ENCODE measurements at regions of chr17 and their contacts with region 1.

Region 1: DNA sequence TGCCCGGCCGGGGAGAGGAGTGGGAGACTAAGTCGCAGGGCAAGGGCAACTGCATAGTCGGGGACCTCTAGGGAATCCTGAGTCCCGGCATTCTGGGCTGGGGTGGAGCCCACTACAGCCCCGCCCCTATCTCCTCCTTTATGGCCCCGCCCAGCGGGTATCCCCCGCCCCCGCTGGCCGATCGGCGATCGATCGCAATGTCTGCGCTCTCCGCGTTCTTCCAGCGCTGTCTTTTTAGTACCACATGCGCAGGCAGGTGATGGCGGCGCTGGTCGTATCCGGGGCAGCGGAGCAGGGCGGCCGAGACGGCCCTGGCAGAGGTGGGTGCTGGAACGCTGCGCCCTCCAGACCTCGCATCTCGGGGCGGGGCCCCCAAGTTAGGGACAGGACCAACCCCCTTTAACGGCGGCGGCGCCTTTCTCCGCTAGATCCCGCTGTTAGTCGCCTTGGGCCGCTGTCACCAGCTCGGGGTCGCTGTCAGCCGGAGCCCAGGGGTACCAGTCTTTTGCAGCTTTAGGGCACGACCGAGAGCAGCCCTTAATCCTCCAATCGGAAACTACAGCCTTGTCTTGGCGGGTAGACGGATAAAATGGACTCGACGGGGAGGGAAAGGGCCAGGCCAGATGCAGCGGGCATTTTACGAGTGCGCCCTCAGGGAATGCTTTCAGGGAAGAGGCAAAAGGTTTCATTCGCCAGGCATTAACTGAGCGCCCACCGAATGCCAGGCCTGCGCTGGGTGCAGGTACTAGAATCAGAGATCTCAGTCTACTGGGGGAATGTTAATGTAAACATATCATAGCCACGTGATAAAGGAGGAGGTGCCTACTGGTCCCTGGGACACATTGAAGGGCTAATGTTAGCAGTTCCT is at the start of gene DPH1:
- DNase-seq: peak; percentile 91 to 99
- ATAC-seq: peak; percentile 83 to 93
- H3K4me3 ChIP-seq: peak within 1 kb of the TSS; percentile 80
- H3K27ac ChIP-seq: peak within 1 kb of the TSS; percentile 71 to 90
- H3K4me1 ChIP-seq: peaks cover 19% of the 10 kb centered on the region
- CTCF ChIP-seq: no peak
- EP300 ChIP-seq: no peak
- POLR2A ChIP-seq: peak; percentile 64
- RAD21 ChIP-seq: peak in 1 of 2 experiments; percentile 9; a peak in 3 of 5 replicates
- polyA plus RNA-seq, gene DPH1: 25.5 and 33.0 TPM in 2 replicates

Region 2: DNA sequence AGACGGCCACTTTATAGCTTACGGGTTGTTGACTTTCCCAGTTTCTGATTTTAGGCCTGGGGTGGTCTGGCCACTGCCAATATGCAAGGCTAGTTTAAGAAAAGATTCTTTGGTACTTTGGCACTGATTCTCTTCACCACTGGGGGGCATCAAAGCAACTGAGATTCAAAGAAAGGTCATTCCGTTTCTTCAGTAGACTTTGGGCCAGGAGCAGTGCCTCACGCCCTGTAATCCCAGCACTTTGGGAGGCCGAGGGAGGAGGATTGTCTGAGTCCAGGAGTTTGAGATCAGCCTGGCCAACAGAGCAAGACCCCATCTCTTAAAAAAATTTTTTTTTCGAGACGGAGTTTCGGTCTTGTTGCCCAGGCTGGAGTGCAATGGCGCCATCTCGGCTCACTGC is 147.3 kb before region 1 on chr17:
- CTCF ChIA-PET with region 1: interaction called, 213 read pairs
- POLR2A ChIA-PET with region 1: no interaction called
- DNase-seq: peak; percentile 59 to 66
- ATAC-seq: peak; percentile 41 to 80; a peak in 3 of 6 replicates
- H3K4me3 ChIP-seq: no peak overlapping the region
- H3K27ac ChIP-seq: no peak overlapping the region
- H3K4me1 ChIP-seq: no peaks in the 10 kb centered on the region
- CTCF ChIP-seq: peak; percentile 58
- EP300 ChIP-seq: no peak
- POLR2A ChIP-seq: no peak
- RAD21 ChIP-seq: peak; percentile 59 to 65

Region 3: GRCh38 chr17:1920948-1921351 is 109.2 kb before region 1 on chr17:
- CTCF ChIA-PET with region 1: interaction called, 420 read pairs
- POLR2A ChIA-PET with region 1: no interaction called
- DNase-seq: no peak
- ATAC-seq: no peak
- H3K4me3 ChIP-seq: no peak overlapping the region
- H3K27ac ChIP-seq: no peak overlapping the region
- H3K4me1 ChIP-seq: no peaks in the 10 kb centered on the region
- CTCF ChIP-seq: no peak
- EP300 ChIP-seq: no peak
- POLR2A ChIP-seq: no peak
- RAD21 ChIP-seq: no peak

Region 4: GRCh38 chr17:1939981-1940809 is 90.0 kb before region 1 on chr17:
- CTCF ChIA-PET with region 1: interaction called, 31 read pairs
- POLR2A ChIA-PET with region 1: no interaction called
- DNase-seq: no peak
- ATAC-seq: no peak
- H3K4me3 ChIP-seq: no peak overlapping the region
- H3K27ac ChIP-seq: no peak overlapping the region
- H3K4me1 ChIP-seq: no peaks in the 10 kb centered on the region
- CTCF ChIP-seq: no peak
- EP300 ChIP-seq: no peak
- POLR2A ChIP-seq: no peak
- RAD21 ChIP-seq: no peak

Region 5: GRCh38 chr17:1972487-1973160 is 57.5 kb before region 1 on chr17:
- CTCF ChIA-PET with region 1: interaction called, 32 read pairs
- POLR2A ChIA-PET with region 1: no interaction called
- DNase-seq: no peak
- ATAC-seq: no peak
- H3K4me3 ChIP-seq: no peak overlapping the region
- H3K27ac ChIP-seq: no peak overlapping the region
- H3K4me1 ChIP-seq: no peaks in the 10 kb centered on the region
- CTCF ChIP-seq: no peak
- EP300 ChIP-seq: no peak
- POLR2A ChIP-seq: no peak
- RAD21 ChIP-seq: no peak

Region 6: DNA sequence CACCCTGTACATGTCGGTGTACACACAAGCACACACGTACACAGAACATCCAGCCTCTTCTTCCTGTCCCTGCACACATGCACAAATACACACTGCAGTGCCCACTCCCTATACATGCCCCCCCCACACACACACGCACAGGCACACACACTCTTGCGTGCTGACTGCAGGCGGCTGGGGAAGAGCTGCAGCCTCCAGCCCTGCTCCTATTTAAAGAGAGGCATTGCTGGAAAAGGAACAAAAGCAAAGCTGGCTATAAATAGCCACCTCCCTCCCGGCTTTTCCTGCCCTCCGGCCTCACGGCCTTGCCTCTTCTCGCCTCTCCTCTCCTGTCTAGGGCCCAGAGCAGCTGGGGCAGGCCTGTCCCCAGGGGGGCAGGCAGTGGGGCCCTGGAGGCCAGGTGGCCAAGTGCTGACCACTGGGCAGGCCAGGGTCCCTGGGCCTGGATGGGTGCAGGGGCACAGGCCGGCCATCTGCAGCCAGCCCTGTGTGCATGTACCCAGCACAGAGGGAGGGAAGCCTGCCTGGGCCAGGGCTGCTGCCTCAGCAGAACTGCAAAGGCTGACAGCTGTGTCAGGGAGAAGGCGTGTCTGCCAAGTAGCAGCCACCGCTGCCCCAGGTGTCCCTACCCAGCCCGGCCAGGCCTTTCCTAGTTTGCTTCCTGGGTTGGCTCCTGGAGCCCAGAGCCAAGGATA is 30.4 kb before region 1 on chr17:
- CTCF ChIA-PET with region 1: interaction called, 81 read pairs
- POLR2A ChIA-PET with region 1: interaction called, 15 read pairs
- DNase-seq: peak in 1 of 2 experiments; percentile 50
- ATAC-seq: peak; percentile 10 to 52; a peak in 3 of 6 replicates
- H3K4me3 ChIP-seq: no peak overlapping the region
- H3K27ac ChIP-seq: peak overlapping the region; percentile 66 to 96
- H3K4me1 ChIP-seq: peaks cover 48% of the 10 kb centered on the region
- CTCF ChIP-seq: no peak
- EP300 ChIP-seq: no peak
- POLR2A ChIP-seq: no peak
- RAD21 ChIP-seq: no peak

Region 7: DNA sequence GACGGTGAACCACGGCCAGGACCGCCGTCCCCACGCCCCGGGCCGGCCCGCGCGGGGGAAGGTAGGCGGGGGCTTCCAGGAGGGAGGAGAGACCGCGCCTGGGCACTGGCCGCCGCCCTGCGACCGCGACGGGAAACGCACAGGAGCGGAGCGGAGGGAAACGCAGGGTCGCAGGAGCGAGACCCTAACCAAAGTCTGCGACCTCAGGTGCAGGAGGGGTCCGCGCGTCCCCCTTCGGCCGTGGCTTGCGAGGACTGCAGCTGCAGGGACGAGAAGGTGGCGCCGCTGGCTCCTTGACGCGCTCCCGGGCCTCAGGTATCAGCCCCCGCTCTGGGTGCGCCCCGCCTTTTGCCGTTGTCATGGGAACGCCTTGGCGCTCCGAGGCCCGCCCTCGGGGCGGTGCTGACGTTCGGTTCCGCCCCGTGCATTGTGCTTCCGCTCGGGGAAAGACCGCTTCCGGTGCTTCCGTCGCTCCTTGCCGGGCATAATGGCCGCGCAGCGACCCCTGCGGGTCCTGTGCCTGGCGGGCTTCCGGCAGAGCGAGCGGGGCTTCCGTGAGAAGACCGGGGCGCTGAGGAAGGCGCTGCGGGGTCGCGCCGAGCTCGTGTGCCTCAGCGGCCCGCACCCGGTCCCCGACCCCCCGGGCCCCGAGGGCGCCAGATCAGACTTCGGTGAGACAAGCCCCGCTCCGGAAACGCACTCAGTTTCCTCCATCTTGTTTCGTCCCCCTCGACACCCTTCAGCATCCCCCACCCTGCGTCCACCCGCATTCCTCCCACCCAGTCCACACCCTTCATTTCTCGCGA is 11.6 kb after region 1 on chr17 and contains the start of gene OVCA2:
- CTCF ChIA-PET with region 1: interaction called, 224 read pairs
- POLR2A ChIA-PET with region 1: interaction called, 3 read pairs
- DNase-seq: peak; percentile 94 to 96
- ATAC-seq: peak; percentile 82 to 91
- H3K4me3 ChIP-seq: peak within 1 kb of the TSS; percentile 85
- H3K27ac ChIP-seq: peak within 1 kb of the TSS; percentile 93 to 99
- H3K4me1 ChIP-seq: peaks cover 24% of the 10 kb centered on the region
- CTCF ChIP-seq: peak; percentile 47
- EP300 ChIP-seq: no peak
- POLR2A ChIP-seq: peak; percentile 71
- RAD21 ChIP-seq: peak; percentile 56 to 61
- polyA plus RNA-seq, gene OVCA2: 66.3 and 73.1 TPM in 2 replicates